HCT116 (cell line): ENCODE measurements at regions of chr1 and their contacts with region 1.

Region 1: GRCh38 chr1:37028981-37029617 is 5.2 kb downstream of the GRIK3 start:
- DNase-seq: no peak
- ATAC-seq: peak; percentile 58; the same call in 1 of the 2 replicates
- H3K4me3 ChIP-seq: no peak overlapping the region
- H3K27ac ChIP-seq: no peak overlapping the region
- H3K4me1 ChIP-seq: no peaks in the 10 kb centered on the region
- H3K27me3 ChIP-seq: peaks cover 52% of the 10 kb centered on the region
- CTCF ChIP-seq: peak in 2 of 3 experiments; percentile 21 to 23; a peak in 1 of 6 replicates
- POLR2A ChIP-seq: no peak
- RAD21 ChIP-seq: no peak

Region 2: DNA sequence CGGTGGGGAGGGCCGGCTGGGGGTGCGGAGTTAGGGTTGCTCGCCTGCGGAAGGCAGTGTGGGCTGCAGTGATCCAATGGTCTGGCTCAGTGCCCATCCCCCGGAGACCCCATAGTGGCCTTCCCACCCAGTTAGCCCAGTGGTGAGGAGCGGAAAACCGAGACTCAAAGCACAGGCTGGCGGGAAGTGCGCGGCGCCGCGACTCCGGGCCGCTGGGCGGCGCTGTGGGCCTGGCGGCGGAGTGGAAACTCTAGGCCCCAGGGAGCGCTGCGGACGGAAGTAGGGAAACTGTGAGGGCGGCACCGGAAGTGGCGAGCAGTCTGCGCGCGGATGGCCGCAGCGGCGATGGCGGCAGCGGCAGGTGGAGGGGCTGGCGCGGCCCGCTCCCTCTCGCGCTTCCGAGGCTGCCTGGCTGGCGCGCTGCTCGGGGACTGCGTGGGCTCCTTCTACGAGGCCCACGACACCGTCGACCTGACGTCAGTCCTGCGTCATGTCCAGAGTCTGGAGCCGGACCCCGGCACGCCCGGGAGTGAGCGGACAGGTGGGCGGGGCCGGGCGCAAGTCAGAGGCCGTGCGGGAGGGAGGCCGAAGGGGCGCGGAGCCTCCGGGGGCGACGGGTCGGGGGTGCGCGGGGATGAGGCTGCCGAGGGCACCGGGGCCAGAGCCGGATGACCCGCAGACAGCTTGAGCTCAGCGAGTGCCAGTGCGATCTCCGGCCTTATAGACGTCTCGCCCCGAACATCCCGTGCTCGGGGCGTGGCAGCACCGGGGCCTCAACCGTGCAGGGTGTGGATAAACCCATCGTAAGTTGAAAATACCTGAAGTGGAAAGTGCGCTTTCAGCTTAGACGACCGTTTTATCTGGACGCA is 940.3 kb before region 1 on chr1 and contains the start of gene ADPRS:
- CTCF ChIA-PET with region 1: no interaction called
- POLR2A ChIA-PET with region 1: no interaction called
- RAD21 ChIA-PET with region 1: no interaction called
- intact Hi-C with region 1: no loop called
- DNase-seq: peak; percentile 75
- ATAC-seq: peak; percentile 82
- H3K4me3 ChIP-seq: peak within 1 kb of the TSS; percentile 96 to 98
- H3K27ac ChIP-seq: peak within 1 kb of the TSS; percentile 76
- H3K4me1 ChIP-seq: peaks cover 0 to 15% of the 10 kb centered on the region in 2 experiments; a peak in 2 of 4 replicates
- H3K27me3 ChIP-seq: no peaks in the 10 kb centered on the region
- CTCF ChIP-seq: peak; percentile 81 to 98 (median 89)
- POLR2A ChIP-seq: peak; percentile 76
- RAD21 ChIP-seq: peak; percentile 53; the same call in 1 of the 2 replicates
- total RNA-seq, gene ADPRS: 28.2 TPM

Region 3: DNA sequence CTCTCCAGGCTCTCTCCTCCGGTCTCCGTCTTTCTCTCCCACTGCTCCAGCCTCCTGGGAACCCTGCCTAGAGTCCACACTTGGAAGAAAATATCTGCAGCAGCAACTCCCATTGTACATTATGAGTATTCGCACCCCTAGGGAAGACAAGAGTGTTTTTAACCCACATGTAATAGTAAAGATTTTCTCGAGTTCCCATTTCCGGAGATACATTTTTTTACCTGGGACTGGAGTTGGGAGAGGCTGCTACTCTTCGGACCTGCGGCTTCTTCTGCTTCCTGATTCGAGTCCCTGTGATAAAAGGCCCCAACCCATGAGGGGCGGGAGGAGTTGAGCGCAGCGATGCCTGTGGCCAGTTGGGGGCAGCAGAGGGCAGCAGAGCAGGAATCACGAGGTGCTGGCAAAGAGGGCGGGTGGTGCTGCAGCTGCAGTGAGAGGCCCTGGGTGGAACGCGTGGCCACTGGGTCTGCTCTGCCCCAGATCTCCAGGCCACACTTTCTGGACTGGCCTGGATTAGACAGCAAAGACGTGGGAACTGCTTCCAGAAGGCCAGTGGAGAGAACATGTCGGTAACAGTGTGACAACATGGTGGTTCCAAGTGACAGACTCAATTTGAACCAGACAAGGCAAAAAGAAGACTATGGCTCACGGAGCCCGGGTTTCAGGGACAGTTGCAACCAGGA is 325.4 kb before region 1 on chr1:
- CTCF ChIA-PET with region 1: no interaction called
- POLR2A ChIA-PET with region 1: no interaction called
- RAD21 ChIA-PET with region 1: no interaction called
- intact Hi-C with region 1: loop called (anchors 5 kb)
- DNase-seq: peak; percentile 58
- ATAC-seq: peak; percentile 98
- H3K4me3 ChIP-seq: no peak overlapping the region
- H3K27ac ChIP-seq: no peak overlapping the region
- H3K4me1 ChIP-seq: peaks cover 0 to 9% of the 10 kb centered on the region in 2 experiments; a peak in 2 of 4 replicates
- H3K27me3 ChIP-seq: peaks cover 47% of the 10 kb centered on the region
- CTCF ChIP-seq: peak; percentile 80 to 97 (median 91)
- POLR2A ChIP-seq: no peak
- RAD21 ChIP-seq: peak; percentile 94

Region 4: DNA sequence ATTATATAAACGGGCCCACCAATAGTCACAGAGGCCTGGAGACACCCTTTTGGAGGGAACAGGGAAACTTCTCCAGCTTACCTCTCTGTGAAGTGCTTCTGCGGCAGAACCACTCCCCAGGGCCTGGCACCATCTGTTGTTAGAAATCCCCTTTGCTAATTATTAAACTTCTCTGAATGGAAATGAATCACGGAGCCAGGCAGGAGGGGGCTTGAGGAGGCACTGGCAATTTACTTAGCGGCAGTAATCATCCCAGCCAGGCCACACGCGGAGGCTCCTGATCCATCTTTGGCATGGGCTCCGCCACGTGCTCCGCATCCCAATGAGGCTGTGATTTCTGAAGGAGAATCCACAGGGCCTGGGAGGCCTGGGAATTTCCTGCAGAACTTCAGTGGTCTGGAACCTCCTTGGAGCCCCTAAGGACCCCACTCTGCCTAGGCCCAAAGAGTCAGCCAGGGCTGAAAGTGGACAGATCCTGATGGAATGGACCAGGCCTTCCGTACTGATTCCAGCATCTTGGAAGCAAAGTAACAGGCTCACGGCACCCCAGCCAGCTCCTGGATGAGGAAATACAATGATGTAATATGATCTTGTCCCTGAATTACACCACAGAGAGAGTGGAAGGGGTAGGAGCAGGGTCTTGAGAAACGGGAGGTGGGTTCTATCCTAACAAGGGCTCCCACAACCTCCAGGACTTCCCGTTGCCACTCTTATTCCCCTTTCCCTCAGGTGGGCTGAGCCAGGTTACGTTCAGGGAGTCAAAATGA is 57.1 kb before region 1 on chr1:
- CTCF ChIA-PET with region 1: no interaction called
- POLR2A ChIA-PET with region 1: no interaction called
- RAD21 ChIA-PET with region 1: no interaction called
- intact Hi-C with region 1: no loop called
- DNase-seq: no peak
- ATAC-seq: no peak
- H3K4me3 ChIP-seq: no peak overlapping the region
- H3K27ac ChIP-seq: no peak overlapping the region
- H3K4me1 ChIP-seq: no peaks in the 10 kb centered on the region
- H3K27me3 ChIP-seq: peaks cover 14% of the 10 kb centered on the region; the same call in 1 of the 2 replicates
- CTCF ChIP-seq: no peak
- POLR2A ChIP-seq: no peak
- RAD21 ChIP-seq: no peak